Heart left ventricle (tissue), 16 donors: ENCODE measurements at regions of chr16 and their contacts with region 1.

Region 1: DNA sequence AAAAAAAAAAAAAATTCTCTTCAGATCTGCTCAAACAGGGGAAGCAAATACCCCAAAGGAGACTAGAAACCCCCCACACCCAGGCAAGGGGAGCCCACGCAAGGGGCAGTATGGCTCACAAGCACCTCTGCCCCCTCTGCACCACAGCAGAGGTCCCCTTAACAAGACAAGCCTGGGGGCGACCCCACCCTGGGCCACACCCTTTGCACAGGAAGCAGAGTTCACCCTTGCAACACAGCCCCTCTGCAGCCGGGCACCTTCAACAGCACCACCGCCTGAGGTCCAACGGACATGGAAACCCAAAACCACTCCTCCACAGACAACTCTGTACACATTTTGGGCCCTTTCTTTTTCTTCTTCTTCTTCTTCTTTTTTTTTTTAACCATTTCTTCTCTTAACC is 12.8 kb downstream of the AXIN1 start:
- DNase-seq: peak in 1 of 5 donors; percentile 38
- ATAC-seq: no peak
- H3K4me3 ChIP-seq: no peak overlapping the region
- H3K27ac ChIP-seq: peak overlapping the region in 1 of 12 donors; percentile 3
- H3K4me1 ChIP-seq: peaks cover 0 to 44% (median 2%) of the 10 kb centered on the region in 12 donors
- H3K27me3 ChIP-seq: no peaks in the 10 kb centered on the region
- CTCF ChIP-seq: no peak
- POLR2A ChIP-seq: no peak

Region 2: GRCh38 chr16:239953-240287 is 99.8 kb before region 1 on chr16:
- intact Hi-C with region 1: loop called in 1 of 10 experiments (anchors 10 kb)
- DNase-seq: peak in 1 of 5 donors; percentile 23
- ATAC-seq: no peak
- H3K4me3 ChIP-seq: no peak overlapping the region
- H3K27ac ChIP-seq: peak overlapping the region in 11 of 12 donors; percentile 15 to 67 (median 50)
- H3K4me1 ChIP-seq: peaks cover 0 to 60% (median 34%) of the 10 kb centered on the region in 12 donors
- H3K27me3 ChIP-seq: no peaks in the 10 kb centered on the region
- CTCF ChIP-seq: no peak
- POLR2A ChIP-seq: no peak